Sciatic nerve (tissue), 2 donors: ENCODE measurements at regions of chr2 and their contacts with region 1.

Region 1: GRCh38 chr2:218979846-218980734 is 4.9 kb downstream of the FEV start:
- DNase-seq: peak; percentile 90
- ATAC-seq: peak; percentile 87

Region 2: GRCh38 chr2:219119422-219120043 is 139.4 kb after region 1 on chr2:
- intact Hi-C with region 1: loop called (anchors 10 kb)
- DNase-seq: peak; percentile 79
- ATAC-seq: no peak